IMR-90 (cell line): ENCODE measurements at regions of chr19 and their contacts with region 1.

Region 1: DNA sequence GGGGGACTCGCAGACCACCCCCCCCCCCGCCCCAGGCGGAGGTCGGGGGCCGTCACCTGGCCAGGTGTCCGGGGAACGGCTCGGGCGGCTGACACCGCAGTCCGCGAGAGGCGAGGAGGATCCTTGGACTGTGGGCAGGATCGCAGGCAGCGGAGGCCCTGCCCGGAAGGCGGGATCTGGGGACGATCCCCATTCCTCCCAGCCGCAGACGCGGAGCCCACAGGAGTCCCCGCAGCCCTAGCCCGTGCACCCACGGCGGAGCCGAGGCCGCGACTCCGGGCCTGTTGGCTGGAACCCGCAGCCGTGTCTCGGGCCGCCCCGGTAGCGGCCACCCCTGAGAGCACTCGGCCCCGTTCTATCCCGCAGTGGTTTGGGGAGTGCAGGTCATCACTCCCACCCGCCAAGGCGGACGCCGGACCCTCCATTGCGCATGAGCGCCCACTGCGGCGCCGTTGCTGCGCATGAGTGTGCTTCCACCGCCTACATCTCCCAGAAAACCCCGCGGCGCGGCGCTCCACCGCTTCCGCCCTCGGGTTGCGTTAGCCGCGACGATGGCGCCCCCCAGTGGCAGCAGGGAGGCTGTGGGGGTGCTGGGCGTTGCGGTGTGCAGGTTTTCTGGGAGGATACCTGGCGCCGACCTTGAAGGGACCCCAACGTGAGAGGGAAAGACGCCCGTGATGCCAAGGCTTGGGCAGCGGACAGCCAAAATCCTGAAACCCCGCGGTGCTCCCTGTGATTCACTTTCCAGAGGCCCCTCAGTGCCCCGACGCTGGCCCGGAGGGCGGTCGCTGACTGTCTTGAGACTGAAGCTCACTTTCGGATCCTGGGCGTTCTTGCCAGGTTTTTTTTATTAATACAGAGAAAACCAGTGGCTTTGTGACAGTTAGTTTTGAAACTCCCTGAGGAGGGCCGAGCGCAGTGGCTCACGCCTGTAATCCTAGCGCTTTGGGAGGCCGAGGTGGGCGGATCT is 4.4 kb upstream of the ZNF329 start:
- DNase-seq: peak; percentile 91
- ATAC-seq: peak; percentile 92
- H3K4me3 ChIP-seq: peak overlapping the region; percentile 72
- H3K27ac ChIP-seq: peak overlapping the region; percentile 70
- H3K4me1 ChIP-seq: no peaks in the 10 kb centered on the region; the same call in 1 of the 2 replicates
- H3K27me3 ChIP-seq: no peaks in the 10 kb centered on the region
- CTCF ChIP-seq: peak; percentile 99
- POLR2A ChIP-seq: peak; percentile 62; the same call in 1 of the 2 replicates
- RAD21 ChIP-seq: peak; percentile 99

Region 2: GRCh38 chr19:57191141-57192076 is 963.6 kb before region 1 on chr19 and contains the start of gene ZNF264:
- CTCF ChIA-PET with region 1: no interaction called
- POLR2A ChIA-PET with region 1: no interaction called
- dilution Hi-C with region 1: no loop called
- in situ Hi-C with region 1: no loop called
- intact Hi-C with region 1: loop called (anchors 10 kb)
- DNase-seq: peak; percentile 85
- ATAC-seq: peak; percentile 97
- H3K4me3 ChIP-seq: peak within 1 kb of the TSS; percentile 93
- H3K27ac ChIP-seq: peak within 1 kb of the TSS; percentile 97
- H3K4me1 ChIP-seq: no peaks in the 10 kb centered on the region; the same call in 1 of the 2 replicates
- H3K27me3 ChIP-seq: no peaks in the 10 kb centered on the region
- CTCF ChIP-seq: 0 out of 2 replicates have a peak, but pooled peaks have one; percentile 22
- POLR2A ChIP-seq: peak; percentile 80
- RAD21 ChIP-seq: 0 out of 2 replicates have a peak, but pooled peaks have one; percentile 1
- total RNA-seq, gene ZNF264: 23.9 and 31.9 TPM in 2 replicates

Region 3: GRCh38 chr19:57578487-57579205 is 576.3 kb before region 1 on chr19 and contains the start of gene ZNF416:
- CTCF ChIA-PET with region 1: no interaction called
- POLR2A ChIA-PET with region 1: no interaction called
- dilution Hi-C with region 1: no loop called
- in situ Hi-C with region 1: no loop called
- intact Hi-C with region 1: loop called (anchors 2 kb)
- DNase-seq: peak; percentile 99
- ATAC-seq: peak; percentile 95
- H3K4me3 ChIP-seq: peak within 1 kb of the TSS; percentile 66
- H3K27ac ChIP-seq: peak within 1 kb of the TSS; percentile 21
- H3K4me1 ChIP-seq: peaks cover 2% of the 10 kb centered on the region; the same call in 1 of the 2 replicates
- H3K27me3 ChIP-seq: no peaks in the 10 kb centered on the region
- CTCF ChIP-seq: peak; percentile 39
- POLR2A ChIP-seq: no peak
- RAD21 ChIP-seq: no peak
- total RNA-seq, gene ZNF416: 6.1 and 8.1 TPM in 2 replicates

Region 4: DNA sequence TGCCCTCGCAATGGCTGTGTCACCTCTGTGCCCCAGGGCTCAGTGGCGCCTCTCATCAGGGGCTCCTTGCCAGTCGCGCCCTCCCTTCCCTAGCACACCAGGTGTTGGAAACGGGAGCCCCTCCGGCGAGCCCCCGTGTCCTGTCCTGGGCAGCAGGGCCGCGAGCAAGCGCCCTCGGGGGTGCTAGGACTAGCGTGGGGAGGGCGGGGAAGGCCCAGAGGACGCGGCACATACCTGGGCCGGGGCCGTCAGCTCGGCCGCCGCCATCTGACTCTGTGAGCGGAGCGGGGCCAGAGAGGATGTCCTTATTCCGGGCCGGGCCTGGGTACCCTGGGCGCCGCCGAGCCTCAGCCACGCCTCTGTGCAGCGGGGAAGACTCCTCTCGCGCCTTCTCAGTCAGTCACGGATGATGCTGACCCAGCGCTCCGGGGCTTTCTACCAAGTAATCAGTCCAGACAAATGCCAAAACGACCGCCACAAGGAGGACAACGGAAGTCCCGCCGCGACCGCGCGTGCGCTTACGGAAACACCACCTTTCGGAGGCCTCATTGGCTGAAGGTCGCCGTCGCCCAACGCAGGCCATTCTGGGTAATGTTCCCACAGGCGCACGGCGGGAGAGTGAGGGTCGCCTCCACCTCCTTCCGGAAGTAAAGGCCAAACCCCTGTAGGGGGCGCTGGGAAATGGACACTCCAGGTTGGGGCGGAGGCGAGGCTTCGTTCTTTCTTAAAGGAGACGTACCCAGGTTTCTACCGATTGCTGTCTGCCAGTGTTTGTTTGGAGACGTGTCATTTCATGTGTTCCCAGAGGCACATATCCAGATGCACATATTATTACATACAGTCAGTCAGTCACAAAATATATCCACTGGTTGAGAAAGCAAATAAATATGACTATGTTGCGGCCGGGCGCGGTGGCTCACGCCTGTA is 207.5 kb before region 1 on chr19 and contains the start of gene ZNF256:
- CTCF ChIA-PET with region 1: no interaction called
- POLR2A ChIA-PET with region 1: no interaction called
- dilution Hi-C with region 1: no loop called
- in situ Hi-C with region 1: no loop called
- intact Hi-C with region 1: loop called (anchors 2 kb)
- DNase-seq: peak; percentile 93
- ATAC-seq: peak; percentile 99
- H3K4me3 ChIP-seq: peak within 1 kb of the TSS; percentile 83
- H3K27ac ChIP-seq: peak within 1 kb of the TSS; percentile 18
- H3K4me1 ChIP-seq: peaks cover 4% of the 10 kb centered on the region; the same call in 1 of the 2 replicates
- H3K27me3 ChIP-seq: no peaks in the 10 kb centered on the region
- CTCF ChIP-seq: peak; percentile 71
- POLR2A ChIP-seq: peak; percentile 37; the same call in 1 of the 2 replicates
- RAD21 ChIP-seq: peak; percentile 26
- total RNA-seq, gene ZNF256: 6.1 and 7.0 TPM in 2 replicates

Region 5: DNA sequence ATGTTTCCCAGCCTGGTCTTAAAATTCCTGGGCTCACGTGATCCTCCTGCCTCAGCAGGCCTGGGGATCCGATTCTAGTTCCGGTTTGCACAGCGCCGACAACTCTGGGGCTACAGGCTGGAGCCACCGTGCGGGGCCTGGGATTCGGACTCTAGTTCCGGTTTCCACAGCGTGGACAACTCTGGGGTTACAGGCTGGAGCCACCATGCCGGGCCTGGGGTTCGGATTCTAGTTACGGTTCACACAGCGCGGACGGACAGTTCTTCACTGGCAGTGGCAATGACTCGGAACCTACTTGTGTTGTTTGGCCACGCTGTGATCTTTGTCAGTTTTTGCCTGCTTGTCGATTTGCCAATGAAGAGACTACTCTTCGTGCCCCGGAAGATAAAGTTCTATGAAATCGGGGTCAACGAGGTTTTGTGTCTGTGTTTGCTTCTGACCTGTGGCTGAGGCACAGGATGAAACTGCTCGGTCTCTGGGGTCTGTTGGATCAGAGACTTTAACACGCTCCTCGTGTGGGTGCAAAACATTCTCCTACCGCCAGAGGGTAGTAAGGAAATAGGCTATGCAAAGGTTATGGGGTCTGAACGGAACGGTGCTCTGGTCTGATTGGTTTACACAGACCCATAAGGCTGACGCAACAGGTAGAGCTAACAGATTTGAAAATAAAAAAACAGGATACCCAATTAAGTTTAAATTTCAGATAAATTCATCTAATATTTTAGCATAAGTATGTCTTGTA is 133.3 kb before region 1 on chr19:
- CTCF ChIA-PET with region 1: no interaction called
- POLR2A ChIA-PET with region 1: no interaction called
- dilution Hi-C with region 1: no loop called
- in situ Hi-C with region 1: no loop called
- intact Hi-C with region 1: loop called (anchors 1 kb)
- DNase-seq: peak; percentile 40
- ATAC-seq: peak; percentile 67
- H3K4me3 ChIP-seq: no peak overlapping the region
- H3K27ac ChIP-seq: no peak overlapping the region
- H3K4me1 ChIP-seq: no peaks in the 10 kb centered on the region
- H3K27me3 ChIP-seq: no peaks in the 10 kb centered on the region
- CTCF ChIP-seq: peak; percentile 42
- POLR2A ChIP-seq: no peak
- RAD21 ChIP-seq: peak; percentile 44